ENCODE measurements at regions of chr11 and their contacts with region 1.

Region 1: GRCh38 chr11:121451986-121452608 is at the start of gene SORL1:
- DNase-seq: peak; percentile 85
- H3K4me3 ChIP-seq: peak within 1 kb of the TSS; percentile 74 to 94 (median 82)
- H3K27ac ChIP-seq: peak within 1 kb of the TSS; percentile 43 to 81 (median 73)
- H3K4me1 ChIP-seq: peaks cover 0 to 23% (median 16%) of the 10 kb centered on the region in 4 donors
- H3K27me3 ChIP-seq: no peaks in the 10 kb centered on the region
- CTCF ChIP-seq: peak; percentile 42 to 58 (median 48)
- EP300 ChIP-seq: no peak
- POLR2A ChIP-seq: no peak
- total RNA-seq, gene SORL1: 8.1 to 17.1 (median 14.2) TPM

Region 2: DNA sequence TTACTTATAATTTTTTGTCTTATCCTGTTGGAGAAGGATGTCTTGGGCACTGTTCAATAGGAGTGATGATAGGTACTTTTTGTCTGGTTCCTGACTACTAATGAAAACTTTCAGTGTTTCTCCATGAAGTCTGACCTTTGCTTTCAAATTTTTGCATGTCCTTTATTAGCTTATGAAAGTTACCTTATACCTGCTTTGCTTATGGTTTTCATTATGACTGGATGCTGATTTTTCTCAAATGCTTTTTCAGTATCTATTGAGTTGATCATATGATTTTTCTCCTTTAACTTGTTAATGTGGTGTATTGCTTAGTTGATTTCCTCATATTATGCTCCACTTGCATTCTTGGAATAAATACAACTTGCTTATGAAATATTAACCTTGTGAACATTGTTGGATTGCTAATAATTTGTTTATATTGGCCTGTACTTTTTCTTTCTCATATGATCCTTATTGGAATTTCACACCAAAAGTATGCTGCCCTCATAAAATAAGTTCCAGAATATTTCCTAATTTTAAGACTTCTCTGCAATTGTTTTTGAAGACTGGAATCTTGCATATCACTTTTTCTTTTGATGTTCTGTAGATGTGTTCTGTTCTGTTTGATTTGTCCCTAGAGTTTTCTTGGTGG is 244.5 kb before region 1 on chr11:
- intact Hi-C with region 1: no loop called
- DNase-seq: no peak
- H3K4me3 ChIP-seq: no peak overlapping the region
- H3K27ac ChIP-seq: no peak overlapping the region
- H3K4me1 ChIP-seq: peaks cover 0 to 18% (median 11%) of the 10 kb centered on the region in 4 donors
- H3K27me3 ChIP-seq: no peaks in the 10 kb centered on the region
- CTCF ChIP-seq: no peak
- EP300 ChIP-seq: no peak
- POLR2A ChIP-seq: no peak

Region 3: GRCh38 chr11:121318848-121319834 is 133.0 kb before region 1 on chr11:
- intact Hi-C with region 1: loop called (anchors 5 kb)
- DNase-seq: no peak
- H3K4me3 ChIP-seq: no peak overlapping the region
- H3K27ac ChIP-seq: no peak overlapping the region
- H3K4me1 ChIP-seq: peaks cover 0 to 6% (median 0%) of the 10 kb centered on the region in 4 donors
- H3K27me3 ChIP-seq: no peaks in the 10 kb centered on the region
- CTCF ChIP-seq: peak; percentile 76 to 86 (median 82)
- EP300 ChIP-seq: no peak
- POLR2A ChIP-seq: no peak

Region 4: DNA sequence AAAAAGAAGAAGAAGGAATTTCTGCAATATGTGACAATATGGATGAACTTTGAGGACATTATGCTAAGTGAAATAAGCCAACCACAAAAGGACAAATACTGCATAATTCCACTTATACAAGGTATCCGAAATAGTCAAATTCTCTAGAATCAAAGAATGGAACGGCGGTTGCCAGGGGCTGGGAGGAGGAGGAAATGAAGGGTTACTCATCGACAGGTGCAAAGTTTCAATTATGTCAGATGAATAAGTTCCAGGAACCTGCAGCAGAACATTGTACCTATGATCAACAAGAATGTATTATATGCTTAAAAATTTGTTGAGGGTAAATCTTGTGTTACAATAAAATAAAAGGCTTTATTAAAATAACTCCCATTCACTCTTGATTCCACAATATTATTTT is 110.5 kb before region 1 on chr11:
- intact Hi-C with region 1: no loop called
- DNase-seq: no peak
- H3K4me3 ChIP-seq: no peak overlapping the region
- H3K27ac ChIP-seq: no peak overlapping the region
- H3K4me1 ChIP-seq: no peaks in the 10 kb centered on the region
- H3K27me3 ChIP-seq: no peaks in the 10 kb centered on the region
- CTCF ChIP-seq: no peak
- EP300 ChIP-seq: no peak
- POLR2A ChIP-seq: no peak

Region 5: DNA sequence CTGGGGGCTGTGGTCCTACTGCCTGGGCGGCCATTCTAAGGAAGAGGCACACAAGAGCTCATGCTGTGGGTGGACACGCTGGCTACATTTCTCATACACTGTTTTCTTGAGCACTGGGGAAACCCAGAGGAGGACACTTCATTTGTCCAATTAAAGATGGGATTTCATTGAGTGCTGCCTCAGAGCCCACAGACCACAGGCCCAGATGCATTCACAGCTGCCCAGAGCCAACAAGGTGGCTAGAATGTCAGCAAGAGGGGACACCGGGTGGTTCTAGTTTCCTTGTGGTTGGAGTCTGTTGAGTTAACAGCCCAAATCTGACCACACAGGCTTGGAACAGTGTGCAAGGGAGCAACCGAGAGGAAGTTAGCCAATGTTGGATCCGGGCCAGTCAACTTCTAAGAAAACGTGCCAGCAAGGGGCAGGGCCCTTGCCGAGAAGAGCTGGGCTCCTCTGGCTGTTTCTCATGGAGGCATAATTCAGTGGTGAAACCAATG is 35.0 kb before region 1 on chr11:
- intact Hi-C with region 1: loop called (anchors 5 kb)
- DNase-seq: peak; percentile 93
- H3K4me3 ChIP-seq: no peak overlapping the region
- H3K27ac ChIP-seq: peak overlapping the region; percentile 55 to 76 (median 64)
- H3K4me1 ChIP-seq: peaks cover 0 to 28% (median 18%) of the 10 kb centered on the region in 4 donors
- H3K27me3 ChIP-seq: no peaks in the 10 kb centered on the region
- CTCF ChIP-seq: no peak
- EP300 ChIP-seq: no peak
- POLR2A ChIP-seq: no peak

Region 6: DNA sequence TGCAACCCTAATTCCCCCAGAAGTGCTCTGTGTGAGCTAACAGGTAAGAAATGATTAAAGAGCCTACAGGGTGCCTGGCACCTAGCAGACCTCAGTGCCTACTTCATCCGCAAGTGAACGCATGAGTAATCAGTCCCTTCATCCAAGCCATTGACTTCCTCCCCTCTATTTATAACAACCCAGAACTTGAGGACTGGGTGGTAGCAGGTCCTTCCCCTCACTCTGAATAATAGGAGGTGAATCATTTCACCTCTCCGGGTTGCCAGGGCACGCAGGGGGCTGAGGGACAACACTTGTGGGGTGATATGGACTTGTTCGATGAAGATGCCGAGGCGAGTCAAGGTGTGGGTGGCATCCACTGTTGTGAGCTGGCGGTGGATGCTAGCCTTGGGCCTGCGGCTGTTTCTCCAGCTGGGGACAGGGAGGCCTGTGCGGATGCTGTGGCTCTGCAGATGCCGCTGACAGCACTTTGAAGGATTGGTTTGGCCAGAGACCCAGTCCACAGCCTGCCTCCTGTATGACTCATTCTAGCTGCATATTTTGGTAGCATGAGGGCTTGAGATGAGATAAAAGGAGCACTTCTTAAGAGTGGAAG is 12.4 kb after region 1 on chr11:
- intact Hi-C with region 1: loop called (anchors 2 kb)
- DNase-seq: peak; percentile 89
- H3K4me3 ChIP-seq: no peak overlapping the region
- H3K27ac ChIP-seq: peak overlapping the region; percentile 80 to 89 (median 84)
- H3K4me1 ChIP-seq: peaks cover 0 to 59% (median 55%) of the 10 kb centered on the region in 4 donors
- H3K27me3 ChIP-seq: no peaks in the 10 kb centered on the region
- CTCF ChIP-seq: no peak
- EP300 ChIP-seq: peak in 1 of 4 donors; percentile 22
- POLR2A ChIP-seq: no peak

Region 7: GRCh38 chr11:121534131-121535093 is 82.3 kb after region 1 on chr11:
- intact Hi-C with region 1: loop called (anchors 5 kb)
- DNase-seq: no peak
- H3K4me3 ChIP-seq: no peak overlapping the region
- H3K27ac ChIP-seq: no peak overlapping the region
- H3K4me1 ChIP-seq: peaks cover 0 to 5% (median 0%) of the 10 kb centered on the region in 4 donors
- H3K27me3 ChIP-seq: no peaks in the 10 kb centered on the region
- CTCF ChIP-seq: peak in 3 of 4 experiments; percentile 27 to 38 (median 31)
- EP300 ChIP-seq: no peak
- POLR2A ChIP-seq: no peak

Region 8: GRCh38 chr11:121591405-121592033 is 139.4 kb after region 1 on chr11:
- intact Hi-C with region 1: loop called (anchors 5 kb)
- DNase-seq: peak; percentile 74
- H3K4me3 ChIP-seq: no peak overlapping the region
- H3K27ac ChIP-seq: peak overlapping the region; percentile 1 to 83 (median 76)
- H3K4me1 ChIP-seq: peaks cover 0 to 32% (median 22%) of the 10 kb centered on the region in 4 donors
- H3K27me3 ChIP-seq: no peaks in the 10 kb centered on the region
- CTCF ChIP-seq: peak; percentile 64 to 90 (median 80)
- EP300 ChIP-seq: no peak
- POLR2A ChIP-seq: no peak

Region 9: GRCh38 chr11:121696177-121696871 is 244.2 kb after region 1 on chr11:
- intact Hi-C with region 1: no loop called
- DNase-seq: peak; percentile 64
- H3K4me3 ChIP-seq: peak overlapping the region in 3 of 4 donors; percentile 7 to 26 (median 11)
- H3K27ac ChIP-seq: peak overlapping the region; percentile 67 to 78 (median 73)
- H3K4me1 ChIP-seq: peaks cover 0 to 19% (median 17%) of the 10 kb centered on the region in 4 donors
- H3K27me3 ChIP-seq: no peaks in the 10 kb centered on the region
- CTCF ChIP-seq: no peak
- EP300 ChIP-seq: no peak
- POLR2A ChIP-seq: no peak